Activated B cell treated with CpG ODN at 0.5 μM for 24 hours (primary cell): ENCODE measurements at regions of chr2 and their contacts with region 1.

Region 1: DNA sequence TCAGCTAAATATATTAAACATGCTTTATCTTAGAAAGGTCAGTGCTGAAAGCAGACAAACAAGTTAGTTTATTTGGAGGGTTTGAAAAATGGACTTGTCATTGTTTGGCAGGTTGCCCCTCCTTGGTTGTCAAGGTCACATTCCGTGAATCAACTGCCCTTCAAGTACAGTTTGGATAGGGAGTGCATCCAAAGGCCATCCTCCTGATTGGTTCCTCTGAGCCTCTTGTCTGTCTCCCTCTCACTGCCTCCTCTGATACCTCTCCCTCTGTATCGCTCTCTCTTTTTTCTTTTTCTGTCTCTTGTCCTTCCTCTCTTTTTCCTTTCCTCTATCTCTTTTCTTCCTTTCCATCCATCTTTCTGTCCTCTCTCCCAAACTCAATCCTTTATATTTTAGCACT is 5.4 kb downstream of the ITGAV start:
- DNase-seq: no peak
- ATAC-seq: no peak
- H3K4me3 Mint-ChIP-seq: no peak overlapping the region
- H3K27ac Mint-ChIP-seq: no peak overlapping the region
- H3K4me1 Mint-ChIP-seq: peaks cover 15% of the 10 kb centered on the region
- H3K27me3 Mint-ChIP-seq: no peaks in the 10 kb centered on the region
- CTCF ChIP-seq: no peak

Region 2: GRCh38 chr2:186607660-186608324 is 12.6 kb after region 1 on chr2:
- CTCF ChIA-PET with region 1: no interaction called
- POLR2A ChIA-PET with region 1: no interaction called
- intact Hi-C with region 1: loop called (anchors 2 kb)
- DNase-seq: no peak
- ATAC-seq: no peak
- H3K4me3 Mint-ChIP-seq: no peak overlapping the region
- H3K27ac Mint-ChIP-seq: no peak overlapping the region
- H3K4me1 Mint-ChIP-seq: no peaks in the 10 kb centered on the region
- H3K27me3 Mint-ChIP-seq: no peaks in the 10 kb centered on the region
- CTCF ChIP-seq: no peak

Region 3: DNA sequence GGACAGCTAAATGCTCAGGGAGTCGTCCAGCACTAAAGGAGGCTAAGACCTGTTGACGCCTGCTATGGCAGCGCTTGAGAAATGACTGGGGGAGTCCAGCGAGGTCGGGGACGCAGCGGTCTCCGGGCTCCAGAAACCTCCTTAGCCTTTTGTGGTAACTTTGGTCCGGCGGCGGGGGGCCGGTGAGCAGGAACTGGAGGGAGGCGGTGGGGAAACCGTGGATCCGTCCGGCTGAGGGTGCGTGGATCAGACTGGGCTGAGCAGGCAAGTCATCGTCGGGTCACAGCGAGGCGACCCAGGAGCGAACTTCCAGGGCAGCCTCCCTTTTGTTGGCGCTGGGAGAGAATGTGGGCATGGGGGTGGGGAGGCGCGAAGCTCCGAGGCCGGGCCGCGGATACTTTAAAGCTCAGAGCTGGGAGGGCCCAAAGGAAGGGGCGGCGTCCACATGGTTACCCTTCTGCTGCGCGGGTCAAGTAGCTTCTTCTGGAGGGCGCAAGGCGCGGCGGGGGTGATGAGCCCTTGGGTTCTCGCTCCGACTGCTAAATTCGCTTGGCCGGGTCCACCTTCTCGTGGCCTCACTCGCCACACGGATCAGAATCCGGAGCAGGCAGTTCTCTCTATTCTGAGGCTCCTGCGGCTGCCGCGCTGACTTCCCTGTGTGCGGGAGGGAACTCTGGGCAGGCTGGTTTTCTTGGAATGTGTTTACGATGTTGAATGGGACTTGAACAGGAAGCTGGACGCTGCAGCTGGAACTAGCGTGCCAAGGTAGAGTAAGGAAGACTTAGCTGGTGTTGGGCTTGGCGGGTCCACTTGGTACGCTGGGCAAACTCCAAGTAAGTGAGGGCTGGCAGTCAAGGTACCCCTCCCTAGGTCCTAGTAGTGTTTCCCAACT is 1697.4 kb after region 1 on chr2:
- CTCF ChIA-PET with region 1: no interaction called
- POLR2A ChIA-PET with region 1: no interaction called
- intact Hi-C with region 1: no loop called
- DNase-seq: no peak
- ATAC-seq: no peak
- H3K4me3 Mint-ChIP-seq: no peak overlapping the region
- H3K27ac Mint-ChIP-seq: no peak overlapping the region
- H3K4me1 Mint-ChIP-seq: no peaks in the 10 kb centered on the region
- H3K27me3 Mint-ChIP-seq: peaks cover 31% of the 10 kb centered on the region
- CTCF ChIP-seq: no peak